ENCODE measurements at regions of chr17 and their contacts with region 1.

Region 1: GRCh38 chr17:59786536-59787319 is 79.3 kb downstream of the VMP1 start:
- DNase-seq: peak; percentile 40 to 96 (median 65)
- ATAC-seq: peak; percentile 88
- H3K4me3 ChIP-seq: peak overlapping the region; percentile 39
- H3K4me3 Mint-ChIP-seq: peak overlapping the region; percentile 85
- H3K27ac ChIP-seq: peak overlapping the region; percentile 81 to 83
- H3K27ac Mint-ChIP-seq: peak overlapping the region; percentile 93
- H3K4me1 ChIP-seq: peaks cover 42% of the 10 kb centered on the region
- H3K4me1 Mint-ChIP-seq: peaks cover 47% of the 10 kb centered on the region
- H3K27me3 ChIP-seq: no peaks in the 10 kb centered on the region
- H3K27me3 Mint-ChIP-seq: no peaks in the 10 kb centered on the region
- CTCF ChIP-seq: no peak

Region 2: DNA sequence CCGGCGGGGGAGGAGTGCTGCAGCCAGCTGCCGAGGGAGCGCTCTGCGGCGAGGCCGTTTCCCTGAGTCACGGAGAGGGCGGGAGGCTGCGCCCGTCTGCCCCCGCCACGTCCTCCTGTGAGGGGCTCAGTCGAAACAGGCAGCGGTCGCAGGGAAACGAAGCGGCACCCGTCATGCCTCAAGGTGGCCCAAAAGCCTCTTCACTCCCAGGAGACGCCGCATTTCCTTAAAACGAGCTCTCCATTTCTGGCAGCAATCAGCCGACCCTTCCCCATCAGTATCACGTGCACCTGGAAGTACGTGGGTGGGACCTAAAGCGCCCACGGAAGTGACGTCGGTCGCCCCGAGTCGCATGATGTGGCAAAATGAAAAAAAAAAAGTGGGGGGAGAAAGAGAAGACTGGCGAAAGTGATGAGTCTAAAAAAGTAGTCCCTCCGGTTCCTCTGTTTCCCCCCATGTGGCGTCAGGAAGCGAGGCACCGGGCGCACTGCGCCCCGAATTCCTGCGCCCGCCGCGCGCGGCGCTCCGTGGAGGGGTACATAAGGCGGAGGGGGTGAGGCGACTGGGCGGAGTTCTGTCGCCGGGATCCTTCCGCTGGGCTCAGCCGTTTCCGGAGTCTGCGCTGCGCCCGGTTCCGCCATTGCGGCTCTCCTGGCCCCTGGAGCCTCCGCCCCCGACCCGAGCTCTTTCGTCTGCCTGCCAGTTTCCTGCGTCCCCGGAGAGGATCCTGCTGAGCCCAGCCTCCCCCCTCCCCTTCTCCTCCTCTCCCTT is 167.2 kb before region 1 on chr17 and contains the start of gene CLTC:
- CTCF ChIA-PET with region 1: no interaction called
- POLR2A ChIA-PET with region 1: interaction called, 5 read pairs
- intact Hi-C with region 1: loop called in 1 of 2 experiments (anchors 1 kb)
- DNase-seq: peak; percentile 81 to 98 (median 88)
- ATAC-seq: peak; percentile 82
- H3K4me3 ChIP-seq: peak within 1 kb of the TSS; percentile 96
- H3K4me3 Mint-ChIP-seq: peak within 1 kb of the TSS; percentile 97
- H3K27ac ChIP-seq: peak within 1 kb of the TSS; percentile 95 to 96
- H3K27ac Mint-ChIP-seq: peak within 1 kb of the TSS; percentile 98
- H3K4me1 ChIP-seq: peaks cover 22% of the 10 kb centered on the region
- H3K4me1 Mint-ChIP-seq: peaks cover 66% of the 10 kb centered on the region
- H3K27me3 ChIP-seq: no peaks in the 10 kb centered on the region
- H3K27me3 Mint-ChIP-seq: no peaks in the 10 kb centered on the region
- CTCF ChIP-seq: no peak
- total RNA-seq, gene CLTC: 81.5 to 89.9 TPM

Region 3: GRCh38 chr17:59829217-59830006 is 42.7 kb after region 1 on chr17:
- CTCF ChIA-PET with region 1: interaction called, 4 read pairs
- POLR2A ChIA-PET with region 1: interaction called, 22 read pairs
- intact Hi-C with region 1: no loop called
- DNase-seq: peak in 3 of 14 experiments; percentile 73 to 88 (median 81)
- ATAC-seq: peak; percentile 75
- H3K4me3 ChIP-seq: peak overlapping the region; percentile 33
- H3K4me3 Mint-ChIP-seq: peak overlapping the region; percentile 70
- H3K27ac ChIP-seq: peak overlapping the region; percentile 25 to 63
- H3K27ac Mint-ChIP-seq: peak overlapping the region; percentile 85
- H3K4me1 ChIP-seq: peaks cover 54% of the 10 kb centered on the region
- H3K4me1 Mint-ChIP-seq: peaks cover 66% of the 10 kb centered on the region
- H3K27me3 ChIP-seq: no peaks in the 10 kb centered on the region
- H3K27me3 Mint-ChIP-seq: no peaks in the 10 kb centered on the region
- CTCF ChIP-seq: no peak

Region 4: GRCh38 chr17:59837308-59838051 is 50.8 kb after region 1 on chr17:
- CTCF ChIA-PET with region 1: interaction called, 8 read pairs
- POLR2A ChIA-PET with region 1: interaction called, 86 read pairs
- intact Hi-C with region 1: loop called (anchors 1 to 5 kb)
- DNase-seq: peak in 10 of 14 experiments; percentile 34 to 98 (median 65)
- ATAC-seq: peak; percentile 89
- H3K4me3 ChIP-seq: peak overlapping the region; percentile 82
- H3K4me3 Mint-ChIP-seq: peak overlapping the region; percentile 94
- H3K27ac ChIP-seq: peak overlapping the region; percentile 77 to 92
- H3K27ac Mint-ChIP-seq: peak overlapping the region; percentile 86
- H3K4me1 ChIP-seq: peaks cover 13% of the 10 kb centered on the region
- H3K4me1 Mint-ChIP-seq: peaks cover 68% of the 10 kb centered on the region
- H3K27me3 ChIP-seq: no peaks in the 10 kb centered on the region
- H3K27me3 Mint-ChIP-seq: no peaks in the 10 kb centered on the region
- CTCF ChIP-seq: no peak

Region 5: GRCh38 chr17:59853168-59853918 is 66.6 kb after region 1 on chr17:
- CTCF ChIA-PET with region 1: interaction called, 8 read pairs
- POLR2A ChIA-PET with region 1: interaction called, 18 read pairs
- intact Hi-C with region 1: loop called in 1 of 2 experiments (anchors 1 kb)
- DNase-seq: peak in 13 of 14 experiments; percentile 28 to 83 (median 60)
- ATAC-seq: peak; percentile 94
- H3K4me3 ChIP-seq: no peak overlapping the region
- H3K4me3 Mint-ChIP-seq: peak overlapping the region; percentile 14
- H3K27ac ChIP-seq: no peak overlapping the region
- H3K27ac Mint-ChIP-seq: peak overlapping the region; percentile 66
- H3K4me1 ChIP-seq: peaks cover 37% of the 10 kb centered on the region
- H3K4me1 Mint-ChIP-seq: peaks cover 29% of the 10 kb centered on the region
- H3K27me3 ChIP-seq: no peaks in the 10 kb centered on the region
- H3K27me3 Mint-ChIP-seq: no peaks in the 10 kb centered on the region
- CTCF ChIP-seq: no peak

Region 6: GRCh38 chr17:59859444-59860025 is 72.8 kb after region 1 on chr17:
- CTCF ChIA-PET with region 1: interaction called, 16 read pairs
- POLR2A ChIA-PET with region 1: interaction called, 7 read pairs
- intact Hi-C with region 1: no loop called
- DNase-seq: peak in 3 of 14 experiments; percentile 67 to 71 (median 71)
- ATAC-seq: peak; percentile 73
- H3K4me3 ChIP-seq: no peak overlapping the region
- H3K4me3 Mint-ChIP-seq: no peak overlapping the region
- H3K27ac ChIP-seq: no peak overlapping the region
- H3K27ac Mint-ChIP-seq: peak overlapping the region; percentile 64
- H3K4me1 ChIP-seq: no peaks in the 10 kb centered on the region
- H3K4me1 Mint-ChIP-seq: peaks cover 5% of the 10 kb centered on the region
- H3K27me3 ChIP-seq: no peaks in the 10 kb centered on the region
- H3K27me3 Mint-ChIP-seq: no peaks in the 10 kb centered on the region
- CTCF ChIP-seq: peak; percentile 60

Region 7: GRCh38 chr17:59892924-59893676 is 106.4 kb after region 1 on chr17 and contains the starts of genes RPS6KB1 and TUBD1:
- CTCF ChIA-PET with region 1: no interaction called
- POLR2A ChIA-PET with region 1: interaction called, 21 read pairs
- intact Hi-C with region 1: no loop called
- DNase-seq: peak; percentile 94 to 100 (median 97)
- ATAC-seq: peak; percentile 91
- H3K4me3 ChIP-seq: peak within 1 kb of the TSS; percentile 79
- H3K4me3 Mint-ChIP-seq: peak within 1 kb of the TSS; percentile 98
- H3K27ac ChIP-seq: peak within 1 kb of the TSS; percentile 88 to 94
- H3K27ac Mint-ChIP-seq: peak within 1 kb of the TSS; percentile 94
- H3K4me1 ChIP-seq: peaks cover 44% of the 10 kb centered on the region
- H3K4me1 Mint-ChIP-seq: peaks cover 65% of the 10 kb centered on the region
- H3K27me3 ChIP-seq: no peaks in the 10 kb centered on the region
- H3K27me3 Mint-ChIP-seq: no peaks in the 10 kb centered on the region
- CTCF ChIP-seq: no peak
- total RNA-seq, gene RPS6KB1: 129 to 135 TPM
- total RNA-seq, gene TUBD1: 7.3 to 9.4 TPM